ENCODE measurements at regions of chr18 and their contacts with region 1.

Region 1: GRCh38 chr18:35497370-35498197 is at the start of gene INO80C:
- DNase-seq: peak; percentile 41 to 94
- H3K4me3 ChIP-seq: peak within 1 kb of the TSS; percentile 68 to 74
- H3K27ac ChIP-seq: peak within 1 kb of the TSS; percentile 90 to 92
- H3K4me1 ChIP-seq: peaks cover 0 to 14% of the 10 kb centered on the region in 2 donors
- H3K27me3 ChIP-seq: no peaks in the 10 kb centered on the region
- CTCF ChIP-seq: no peak
- total RNA-seq, gene INO80C: 11.2 TPM

Region 2: GRCh38 chr18:35290073-35290735 is 207.4 kb before region 1 on chr18 and contains the start of gene ZSCAN30:
- intact Hi-C with region 1: loop called (anchors 5 kb)
- DNase-seq: peak; percentile 79 to 97
- H3K4me3 ChIP-seq: peak within 1 kb of the TSS; percentile 73 to 86
- H3K27ac ChIP-seq: peak within 1 kb of the TSS; percentile 82 to 86
- H3K4me1 ChIP-seq: peaks cover 3 to 11% of the 10 kb centered on the region in 2 donors
- H3K27me3 ChIP-seq: no peaks in the 10 kb centered on the region
- CTCF ChIP-seq: no peak
- total RNA-seq, gene ZSCAN30: 7.5 TPM

Region 3: GRCh38 chr18:35407871-35408481 is 89.6 kb before region 1 on chr18:
- intact Hi-C with region 1: loop called (anchors 1 kb)
- DNase-seq: no peak
- H3K4me3 ChIP-seq: no peak overlapping the region
- H3K27ac ChIP-seq: no peak overlapping the region
- H3K4me1 ChIP-seq: no peaks in the 10 kb centered on the region
- H3K27me3 ChIP-seq: no peaks in the 10 kb centered on the region
- CTCF ChIP-seq: peak; percentile 47 to 73 (median 68)

Region 4: DNA sequence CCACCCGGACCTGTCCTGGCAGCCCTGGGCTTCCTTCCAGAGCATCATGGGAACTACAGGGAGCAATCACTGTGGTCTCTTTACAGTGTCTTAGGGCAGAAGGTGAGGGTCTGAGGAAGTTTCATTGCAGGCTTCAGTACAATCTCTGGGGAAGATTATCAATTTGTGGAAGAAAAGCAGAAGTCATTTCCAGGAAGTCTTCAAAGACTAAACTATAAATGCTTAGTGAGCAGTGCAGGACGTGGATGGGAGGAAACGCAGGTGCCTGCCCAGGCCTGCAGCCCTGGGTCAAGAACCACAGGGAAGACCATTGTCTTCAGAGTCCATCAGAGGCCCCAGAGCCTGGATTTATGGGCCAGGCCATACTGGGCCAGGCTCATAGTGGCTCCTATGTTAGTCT is 54.1 kb before region 1 on chr18:
- intact Hi-C with region 1: no loop called
- DNase-seq: no peak
- H3K4me3 ChIP-seq: no peak overlapping the region
- H3K27ac ChIP-seq: no peak overlapping the region
- H3K4me1 ChIP-seq: no peaks in the 10 kb centered on the region
- H3K27me3 ChIP-seq: no peaks in the 10 kb centered on the region
- CTCF ChIP-seq: no peak

Region 5: GRCh38 chr18:35459005-35459441 is 38.6 kb before region 1 on chr18:
- intact Hi-C with region 1: loop called (anchors 5 kb)
- DNase-seq: peak in 1 of 2 donors; percentile 82
- H3K4me3 ChIP-seq: no peak overlapping the region
- H3K27ac ChIP-seq: peak overlapping the region; percentile 29 to 33
- H3K4me1 ChIP-seq: peaks cover 9 to 32% of the 10 kb centered on the region in 2 donors
- H3K27me3 ChIP-seq: no peaks in the 10 kb centered on the region
- CTCF ChIP-seq: no peak

Region 6: DNA sequence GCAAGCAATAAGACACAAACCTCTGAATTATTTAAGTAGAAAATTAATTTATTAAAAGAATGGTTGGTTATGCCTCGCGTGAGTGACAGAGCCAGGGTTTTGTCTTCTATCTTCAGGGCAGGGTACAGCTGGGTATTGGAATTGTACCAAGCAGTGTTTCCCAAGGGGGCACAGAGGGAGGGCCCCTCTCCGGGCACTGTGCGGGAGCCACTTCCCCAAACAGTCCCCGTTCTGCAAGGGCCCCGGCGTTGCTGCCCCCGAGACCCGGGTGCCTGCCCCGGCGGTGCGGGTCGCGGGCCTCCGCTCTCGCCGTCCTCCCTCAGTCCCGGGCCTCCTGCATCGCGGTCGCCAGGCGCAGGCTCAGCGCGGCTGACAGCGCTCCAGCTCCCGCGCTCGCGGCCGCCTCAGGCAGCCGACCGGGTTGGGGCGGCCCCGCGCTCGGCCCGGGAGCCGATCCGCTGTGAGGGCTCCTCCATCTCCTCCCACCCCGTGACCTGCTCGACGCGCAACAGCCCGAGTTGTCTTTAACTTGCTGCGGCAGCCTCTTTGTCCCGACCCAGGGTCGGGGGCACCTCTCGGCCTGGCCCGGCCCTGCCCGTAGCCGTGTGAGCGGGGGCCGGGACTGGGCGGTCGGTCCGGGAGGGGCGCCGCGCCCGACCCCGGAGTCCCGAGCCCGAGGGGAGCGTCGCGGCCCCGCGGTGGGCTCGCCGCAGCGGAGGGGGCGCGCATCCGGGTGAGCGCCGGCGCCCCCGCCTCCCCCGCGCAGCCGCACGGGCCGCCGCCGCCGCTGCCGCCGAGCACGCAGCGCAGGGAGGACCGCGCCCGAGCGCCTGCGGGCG is 83.3 kb after region 1 on chr18:
- intact Hi-C with region 1: loop called (anchors 1 kb)
- DNase-seq: peak in 1 of 2 donors; percentile 72
- H3K4me3 ChIP-seq: peak overlapping the region; percentile 84 to 86
- H3K27ac ChIP-seq: peak overlapping the region; percentile 93 to 100
- H3K4me1 ChIP-seq: peaks cover 0 to 8% of the 10 kb centered on the region in 2 donors
- H3K27me3 ChIP-seq: no peaks in the 10 kb centered on the region
- CTCF ChIP-seq: no peak

Region 7: GRCh38 chr18:35972197-35973052 is 474.8 kb after region 1 on chr18 and contains the start of gene RMP24:
- intact Hi-C with region 1: loop called (anchors 2 kb)
- DNase-seq: peak; percentile 54 to 95
- H3K4me3 ChIP-seq: peak within 1 kb of the TSS; percentile 85 to 96
- H3K27ac ChIP-seq: peak within 1 kb of the TSS; percentile 89
- H3K4me1 ChIP-seq: peaks cover 4 to 19% of the 10 kb centered on the region in 2 donors
- H3K27me3 ChIP-seq: no peaks in the 10 kb centered on the region
- CTCF ChIP-seq: no peak